ENCODE measurements at regions of chr1 and their contacts with region 1.

Region 1: GRCh38 chr1:94039514-94039870 is 81.5 kb downstream of the ABCA4 start:
- DNase-seq: peak; percentile 63 to 86
- H3K4me3 ChIP-seq: no peak overlapping the region
- H3K27ac ChIP-seq: no peak overlapping the region
- H3K4me1 ChIP-seq: peaks cover 0 to 3% (median 0%) of the 10 kb centered on the region in 4 experiments; a peak in 1 of 7 replicates
- H3K27me3 ChIP-seq: no peaks in the 10 kb centered on the region; a peak in 1 of 7 replicates
- CTCF ChIP-seq: peak; percentile 88 to 96 (median 91)
- EP300 ChIP-seq: 0 out of 3 replicates have a peak, but pooled peaks of 1 of the 2 experiments have one; percentile 9
- POLR2A ChIP-seq: no peak
- RAD21 ChIP-seq: peak; percentile 77 to 87

Region 2: DNA sequence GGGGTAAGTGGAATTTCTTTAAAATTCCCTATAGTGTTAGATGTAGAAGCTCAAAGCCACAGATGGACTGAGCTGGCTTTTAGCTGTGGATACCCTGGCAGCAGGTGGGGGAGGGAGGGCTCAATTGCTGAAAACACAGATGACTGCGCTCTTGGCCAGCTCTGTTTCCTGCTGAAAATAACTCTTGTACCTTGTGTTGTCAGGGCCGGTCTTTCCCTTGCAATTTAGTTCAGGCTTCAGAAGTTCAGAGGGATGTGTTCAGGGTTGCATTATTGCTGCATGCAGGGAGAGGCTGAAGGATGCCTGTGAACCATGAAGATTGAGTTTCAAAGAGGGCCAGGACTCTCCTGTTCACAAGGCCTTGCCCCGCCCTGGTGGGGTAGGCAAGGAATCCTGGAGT is 72.2 kb before region 1 on chr1:
- CTCF ChIA-PET with region 1: no interaction called
- POLR2A ChIA-PET with region 1: no interaction called
- DNase-seq: no peak
- H3K4me3 ChIP-seq: no peak overlapping the region
- H3K27ac ChIP-seq: no peak overlapping the region
- H3K4me1 ChIP-seq: no peaks in the 10 kb centered on the region
- H3K27me3 ChIP-seq: no peaks in the 10 kb centered on the region
- CTCF ChIP-seq: no peak
- EP300 ChIP-seq: no peak
- POLR2A ChIP-seq: no peak
- RAD21 ChIP-seq: no peak

Region 3: DNA sequence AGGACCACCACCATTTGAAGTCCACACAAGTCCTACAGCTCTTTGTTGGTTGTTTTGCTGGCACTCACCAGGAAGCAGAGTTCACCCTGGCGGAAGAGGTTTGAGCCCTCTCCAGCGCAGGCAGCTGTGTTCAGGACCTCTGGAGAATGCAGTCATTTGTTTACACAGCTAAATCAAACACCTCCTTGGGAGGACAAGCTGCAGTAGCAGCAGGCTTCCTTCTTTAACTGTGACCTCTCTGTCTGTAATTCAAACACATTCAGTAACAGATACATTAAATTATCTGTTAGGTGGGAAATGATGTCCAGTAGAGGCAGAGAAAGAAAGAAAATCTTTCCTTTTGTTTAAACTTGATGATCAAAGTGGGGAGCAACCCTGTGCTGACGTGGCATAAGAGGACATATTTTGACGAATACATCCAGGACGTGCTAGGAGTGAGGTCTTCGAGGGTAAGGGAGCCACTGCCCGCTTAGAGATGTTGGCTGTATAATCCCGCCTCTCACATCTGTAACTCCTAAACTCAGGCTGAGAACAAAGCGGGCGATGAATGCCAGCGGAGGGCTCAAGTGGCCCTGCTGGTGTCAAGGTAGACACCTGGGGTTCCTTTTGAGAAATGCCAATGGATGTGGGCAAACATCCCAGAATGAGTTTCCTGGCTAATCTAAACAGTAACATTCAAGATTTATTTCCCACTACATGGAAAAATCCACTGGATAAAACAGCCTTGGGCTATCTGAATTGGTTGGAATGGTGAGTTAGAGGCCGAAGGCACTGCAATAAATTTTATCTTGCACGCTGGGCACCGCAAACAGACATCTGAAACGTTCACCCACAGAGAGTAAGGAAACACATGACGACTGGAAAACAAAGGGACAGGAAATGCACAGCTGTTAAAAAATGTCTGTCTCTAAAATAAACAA is 29.8 kb after region 1 on chr1:
- CTCF ChIA-PET with region 1: interaction called, 409 read pairs
- POLR2A ChIA-PET with region 1: no interaction called
- DNase-seq: no peak
- H3K4me3 ChIP-seq: no peak overlapping the region
- H3K27ac ChIP-seq: no peak overlapping the region
- H3K4me1 ChIP-seq: 0 out of 7 replicates have a peak, but pooled peaks cover 0 to 4% (median 0%) of the 10 kb centered on the region in 4 experiments
- H3K27me3 ChIP-seq: peaks cover 38 to 63% (median 55%) of the 10 kb centered on the region in 4 experiments
- CTCF ChIP-seq: no peak
- EP300 ChIP-seq: no peak
- POLR2A ChIP-seq: no peak
- RAD21 ChIP-seq: no peak

Region 4: GRCh38 chr1:94258873-94259331 is 219.4 kb after region 1 on chr1:
- CTCF ChIA-PET with region 1: interaction called, 17 read pairs
- POLR2A ChIA-PET with region 1: no interaction called
- DNase-seq: no peak
- H3K4me3 ChIP-seq: no peak overlapping the region
- H3K27ac ChIP-seq: no peak overlapping the region
- H3K4me1 ChIP-seq: peaks cover 0 to 5% (median 2%) of the 10 kb centered on the region in 4 experiments; a peak in 2 of 7 replicates
- H3K27me3 ChIP-seq: peaks cover 39 to 75% (median 60%) of the 10 kb centered on the region in 4 experiments
- CTCF ChIP-seq: no peak
- EP300 ChIP-seq: no peak
- POLR2A ChIP-seq: no peak
- RAD21 ChIP-seq: no peak